ENCODE measurements at regions of chr11 and their contacts with region 1.

Region 1: DNA sequence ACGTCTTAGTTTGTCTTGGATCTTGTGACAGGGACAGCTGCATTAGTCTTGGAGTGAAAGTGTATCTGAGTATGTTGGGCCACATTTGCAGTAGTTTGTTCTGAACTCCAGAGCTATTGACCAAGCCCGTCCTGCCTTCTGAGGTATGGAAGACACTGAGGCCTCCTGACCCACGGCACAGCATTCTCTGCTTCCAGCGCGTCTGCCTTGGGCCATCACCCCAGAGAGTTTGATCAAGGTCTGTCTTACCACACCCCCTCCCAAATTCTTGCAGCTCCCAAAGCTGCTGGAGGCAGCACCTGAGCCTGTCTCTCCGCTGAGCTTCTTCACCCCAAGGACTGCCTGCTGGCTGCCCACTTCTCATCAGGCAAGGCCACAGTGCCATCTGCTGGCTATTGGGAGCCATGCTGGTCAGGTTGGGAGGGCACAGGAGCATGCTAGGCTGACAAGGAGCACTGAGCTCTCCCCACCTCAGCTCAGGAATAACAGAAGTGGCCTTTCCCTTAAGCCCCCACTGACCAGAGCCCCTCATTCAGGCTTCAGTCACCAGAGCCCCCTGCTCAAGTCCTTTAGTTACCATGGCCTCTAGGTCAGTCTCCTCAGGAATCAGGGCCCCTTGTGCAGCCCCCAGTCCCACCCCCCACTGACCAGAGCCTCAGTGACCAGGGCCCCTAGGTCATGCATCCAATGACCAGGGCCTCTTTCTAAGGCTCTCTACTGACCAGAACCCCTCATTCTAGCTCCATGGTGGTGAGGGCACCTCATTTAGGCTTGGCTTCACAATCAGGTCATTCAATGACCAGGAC is 27.2 kb upstream of the SMPD1 start:
- DNase-seq: peak; percentile 66 to 96 (median 84)

Region 2: GRCh38 chr11:6022956-6023355 is 340.1 kb before region 1 on chr11:
- intact Hi-C with region 1: loop called (anchors 5 kb)
- DNase-seq: no peak

Region 3: GRCh38 chr11:6505577-6506240 is 142.6 kb after region 1 on chr11:
- intact Hi-C with region 1: no loop called
- DNase-seq: no peak

Region 4: GRCh38 chr11:6635082-6635932 is 272.2 kb after region 1 on chr11:
- intact Hi-C with region 1: no loop called
- DNase-seq: peak in 5 of 10 donors; percentile 45 to 92 (median 59)

Measured in posterior cingulate gyrus (tissue), 11 donors.